IMR-90 (cell line): ENCODE measurements at regions of chr11 and their contacts with region 1.

Region 1: GRCh38 chr11:15580056-15580774 is 465.5 kb downstream of the INSC start:
- DNase-seq: no peak
- ATAC-seq: no peak
- H3K4me3 ChIP-seq: no peak overlapping the region
- H3K27ac ChIP-seq: no peak overlapping the region
- H3K4me1 ChIP-seq: no peaks in the 10 kb centered on the region
- H3K27me3 ChIP-seq: no peaks in the 10 kb centered on the region; the same call in 1 of the 2 replicates
- CTCF ChIP-seq: no peak
- POLR2A ChIP-seq: no peak
- RAD21 ChIP-seq: no peak

Region 2: GRCh38 chr11:15720460-15720859 is 140.2 kb after region 1 on chr11:
- CTCF ChIA-PET with region 1: no interaction called
- POLR2A ChIA-PET with region 1: interaction called, 24 read pairs
- dilution Hi-C with region 1: no loop called
- in situ Hi-C with region 1: no loop called
- intact Hi-C with region 1: no loop called
- DNase-seq: peak; percentile 68
- ATAC-seq: peak; percentile 52
- H3K4me3 ChIP-seq: no peak overlapping the region
- H3K27ac ChIP-seq: peak overlapping the region; percentile 39; the same call in 1 of the 2 replicates
- H3K4me1 ChIP-seq: peaks cover 14% of the 10 kb centered on the region
- H3K27me3 ChIP-seq: no peaks in the 10 kb centered on the region; the same call in 1 of the 2 replicates
- CTCF ChIP-seq: no peak
- POLR2A ChIP-seq: no peak
- RAD21 ChIP-seq: no peak